Naive thymus-derived CD4-positive, alpha-beta T cell (primary cell): ENCODE measurements at regions of chr11 and their contacts with region 1.

Region 1: GRCh38 chr11:75270896-75271418 is 30.4 kb downstream of the TPBGL start:
- DNase-seq: peak in 7 of 9 donors; percentile 13 to 50 (median 44)
- ATAC-seq: no peak
- H3K4me3 ChIP-seq: no peak overlapping the region
- H3K4me3 Mint-ChIP-seq: peak overlapping the region in 3 of 10 donors; percentile 6 to 47 (median 45)
- H3K27ac ChIP-seq: no peak overlapping the region
- H3K27ac Mint-ChIP-seq: peak overlapping the region in 8 of 9 donors; percentile 82 to 99 (median 94)
- H3K4me1 ChIP-seq: peaks cover 22 to 36% of the 10 kb centered on the region in 2 donors
- H3K4me1 Mint-ChIP-seq: peaks cover 24 to 57% (median 41%) of the 10 kb centered on the region in 7 donors
- H3K27me3 ChIP-seq: no peaks in the 10 kb centered on the region
- H3K27me3 Mint-ChIP-seq: no peaks in the 10 kb centered on the region

Region 2: DNA sequence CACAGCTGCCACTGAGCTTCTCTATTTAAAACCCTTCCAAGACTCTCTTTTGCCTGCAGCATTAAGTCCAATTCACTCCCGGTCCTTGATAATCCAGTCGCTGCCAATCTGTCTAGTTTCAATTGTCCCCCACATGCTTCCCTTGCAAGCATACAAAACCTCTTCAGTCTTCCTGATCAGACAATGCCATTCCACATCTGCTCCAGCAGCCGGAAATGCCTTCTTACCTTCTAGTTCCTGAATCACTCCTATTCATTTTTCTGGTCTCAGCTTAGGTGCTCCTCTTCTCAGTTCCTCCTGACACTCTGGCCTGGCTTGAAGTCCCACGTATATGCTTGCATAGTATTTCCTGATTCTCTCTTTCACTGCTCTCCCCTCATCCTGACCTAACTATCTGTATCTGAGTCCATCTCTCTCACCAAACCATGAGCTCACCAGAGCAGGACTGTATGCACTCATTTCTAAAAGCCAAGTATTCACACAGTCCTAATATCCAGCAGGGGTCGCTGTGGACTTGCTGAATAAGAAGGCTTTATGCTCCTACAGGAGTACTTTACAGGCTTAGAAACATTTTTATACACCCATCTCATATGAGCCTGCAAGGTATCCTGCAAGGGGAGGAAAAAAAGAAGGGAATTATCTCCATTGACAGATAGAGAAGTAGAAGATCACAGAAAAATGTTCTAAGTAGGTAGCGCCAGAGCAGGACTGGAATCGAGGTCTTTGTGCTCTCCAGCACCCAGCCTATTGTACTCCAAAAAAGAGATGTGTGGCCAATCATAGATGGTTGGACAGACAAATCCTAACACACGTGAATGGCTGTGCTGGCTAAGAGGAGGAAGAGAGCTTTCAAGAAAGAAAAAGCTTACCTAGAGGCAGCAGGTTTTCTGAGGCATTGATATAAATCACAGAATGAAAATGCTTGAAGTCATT is 341.3 kb before region 1 on chr11:
- CTCF ChIA-PET with region 1: no interaction called
- POLR2A ChIA-PET with region 1: no interaction called
- intact Hi-C with region 1: loop called in 1 of 2 experiments (anchors 1 kb)
- DNase-seq: peak; percentile 9 to 74 (median 59)
- ATAC-seq: peak; percentile 92
- H3K4me3 ChIP-seq: no peak overlapping the region
- H3K4me3 Mint-ChIP-seq: no peak overlapping the region
- H3K27ac ChIP-seq: no peak overlapping the region
- H3K27ac Mint-ChIP-seq: no peak overlapping the region
- H3K4me1 ChIP-seq: no peaks in the 10 kb centered on the region
- H3K4me1 Mint-ChIP-seq: peaks cover 0 to 36% (median 0%) of the 10 kb centered on the region in 7 donors
- H3K27me3 ChIP-seq: no peaks in the 10 kb centered on the region
- H3K27me3 Mint-ChIP-seq: no peaks in the 10 kb centered on the region

Region 3: GRCh38 chr11:75204685-75205563 is 66.0 kb before region 1 on chr11:
- CTCF ChIA-PET with region 1: interaction called, 10 read pairs
- POLR2A ChIA-PET with region 1: no interaction called
- intact Hi-C with region 1: loop called in 1 of 2 experiments (anchors 1 kb)
- DNase-seq: peak; percentile 53 to 86 (median 64)
- ATAC-seq: peak; percentile 92
- H3K4me3 ChIP-seq: no peak overlapping the region
- H3K4me3 Mint-ChIP-seq: no peak overlapping the region
- H3K27ac ChIP-seq: no peak overlapping the region
- H3K27ac Mint-ChIP-seq: no peak overlapping the region
- H3K4me1 ChIP-seq: no peaks in the 10 kb centered on the region
- H3K4me1 Mint-ChIP-seq: peaks cover 0 to 2% (median 0%) of the 10 kb centered on the region in 7 donors
- H3K27me3 ChIP-seq: peaks cover 0 to 2% of the 10 kb centered on the region in 2 donors
- H3K27me3 Mint-ChIP-seq: peaks cover 0 to 9% (median 6%) of the 10 kb centered on the region in 5 donors

Region 4: DNA sequence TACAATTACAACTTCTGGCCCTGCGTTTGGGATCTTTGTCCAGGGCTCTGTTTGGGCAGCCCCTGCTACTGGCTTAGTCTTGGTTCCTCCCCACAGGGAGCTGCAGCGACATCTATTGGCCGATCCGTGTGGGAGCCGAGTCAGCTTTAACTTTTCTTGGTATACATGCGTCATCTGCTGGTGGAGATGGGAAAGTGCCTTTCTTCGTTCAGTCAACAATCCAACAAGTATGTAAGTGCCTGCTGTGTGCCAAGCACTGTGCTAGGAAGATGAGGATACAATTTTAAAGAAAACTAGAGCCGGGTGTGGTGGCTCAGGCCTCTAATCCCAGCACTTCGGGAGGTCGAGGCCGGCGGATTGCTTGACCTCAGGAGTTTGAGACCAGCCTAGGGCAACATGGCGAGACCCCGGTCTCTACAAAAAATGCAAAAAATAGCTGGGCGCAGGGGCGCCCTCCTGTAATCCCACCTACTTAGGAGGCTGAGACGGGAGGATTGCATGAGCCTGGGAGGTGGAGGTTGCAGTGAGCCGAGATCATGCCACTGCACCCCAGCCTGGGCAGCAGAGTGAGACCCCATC is 22.2 kb before region 1 on chr11:
- CTCF ChIA-PET with region 1: interaction called, 83 read pairs
- POLR2A ChIA-PET with region 1: interaction called, 5 read pairs
- intact Hi-C with region 1: loop called in 1 of 2 experiments (anchors 1 kb)
- DNase-seq: peak; percentile 70 to 87 (median 82)
- ATAC-seq: peak; percentile 99
- H3K4me3 ChIP-seq: no peak overlapping the region
- H3K4me3 Mint-ChIP-seq: no peak overlapping the region
- H3K27ac ChIP-seq: no peak overlapping the region
- H3K27ac Mint-ChIP-seq: peak overlapping the region in 2 of 9 donors; percentile 18 to 20
- H3K4me1 ChIP-seq: no peaks in the 10 kb centered on the region
- H3K4me1 Mint-ChIP-seq: peaks cover 0 to 5% (median 4%) of the 10 kb centered on the region in 7 donors
- H3K27me3 ChIP-seq: no peaks in the 10 kb centered on the region
- H3K27me3 Mint-ChIP-seq: peaks cover 0 to 37% (median 10%) of the 10 kb centered on the region in 5 donors

Region 5: DNA sequence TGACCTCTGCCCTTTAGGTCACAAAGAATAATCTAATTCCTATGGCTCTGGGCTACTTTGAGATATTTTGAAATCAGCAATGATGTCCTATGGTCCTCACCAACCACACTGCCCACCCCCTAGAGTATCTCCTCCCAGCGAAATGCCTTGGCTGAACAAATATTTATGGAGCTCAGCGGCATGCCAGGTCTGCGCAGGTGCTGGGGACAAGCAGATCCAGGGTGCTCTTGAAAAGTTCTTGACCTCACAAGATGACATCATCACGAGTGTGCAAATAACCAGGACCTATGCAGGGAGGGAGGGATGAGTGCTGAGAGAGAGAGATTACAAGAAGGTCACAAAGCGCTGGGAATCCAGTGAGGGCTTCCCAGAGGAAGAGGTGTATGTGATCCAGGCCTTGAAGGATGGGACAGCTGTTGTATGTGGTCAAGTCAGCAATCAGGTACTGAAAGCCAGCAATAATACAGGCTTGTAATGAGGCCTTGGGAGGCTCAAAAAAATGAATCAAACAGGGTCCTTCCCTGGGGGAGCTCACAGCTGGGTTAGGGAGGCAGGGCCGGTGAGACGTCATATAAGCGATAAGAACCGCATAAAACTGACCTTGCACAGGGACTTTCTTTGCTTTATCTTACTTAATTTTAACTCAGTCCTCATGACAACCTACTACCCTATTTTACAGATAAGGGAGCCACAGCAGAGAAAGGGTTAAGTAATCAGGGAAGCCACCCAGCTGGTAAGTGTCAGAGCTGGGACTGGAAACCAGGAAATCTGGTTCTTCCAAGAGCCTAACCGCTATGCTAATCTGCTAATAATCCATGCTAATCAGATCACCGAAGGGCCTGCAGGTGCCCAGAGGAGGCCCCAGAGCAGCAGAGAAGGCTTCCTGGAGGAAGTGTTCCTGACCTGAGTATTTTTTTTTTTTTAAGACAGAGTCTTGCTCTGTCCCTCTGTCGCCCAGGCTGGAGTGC is 72.2 kb after region 1 on chr11:
- CTCF ChIA-PET with region 1: interaction called, 5 read pairs
- POLR2A ChIA-PET with region 1: interaction called, 22 read pairs
- intact Hi-C with region 1: no loop called
- DNase-seq: no peak
- ATAC-seq: no peak
- H3K4me3 ChIP-seq: no peak overlapping the region
- H3K4me3 Mint-ChIP-seq: peak overlapping the region in 8 of 10 donors; percentile 6 to 84 (median 40)
- H3K27ac ChIP-seq: peak overlapping the region; percentile 31
- H3K27ac Mint-ChIP-seq: peak overlapping the region; percentile 30 to 98 (median 84)
- H3K4me1 ChIP-seq: peaks cover 35 to 93% of the 10 kb centered on the region in 2 donors
- H3K4me1 Mint-ChIP-seq: peaks cover 84 to 100% (median 98%) of the 10 kb centered on the region in 7 donors
- H3K27me3 ChIP-seq: no peaks in the 10 kb centered on the region
- H3K27me3 Mint-ChIP-seq: no peaks in the 10 kb centered on the region

Region 6: DNA sequence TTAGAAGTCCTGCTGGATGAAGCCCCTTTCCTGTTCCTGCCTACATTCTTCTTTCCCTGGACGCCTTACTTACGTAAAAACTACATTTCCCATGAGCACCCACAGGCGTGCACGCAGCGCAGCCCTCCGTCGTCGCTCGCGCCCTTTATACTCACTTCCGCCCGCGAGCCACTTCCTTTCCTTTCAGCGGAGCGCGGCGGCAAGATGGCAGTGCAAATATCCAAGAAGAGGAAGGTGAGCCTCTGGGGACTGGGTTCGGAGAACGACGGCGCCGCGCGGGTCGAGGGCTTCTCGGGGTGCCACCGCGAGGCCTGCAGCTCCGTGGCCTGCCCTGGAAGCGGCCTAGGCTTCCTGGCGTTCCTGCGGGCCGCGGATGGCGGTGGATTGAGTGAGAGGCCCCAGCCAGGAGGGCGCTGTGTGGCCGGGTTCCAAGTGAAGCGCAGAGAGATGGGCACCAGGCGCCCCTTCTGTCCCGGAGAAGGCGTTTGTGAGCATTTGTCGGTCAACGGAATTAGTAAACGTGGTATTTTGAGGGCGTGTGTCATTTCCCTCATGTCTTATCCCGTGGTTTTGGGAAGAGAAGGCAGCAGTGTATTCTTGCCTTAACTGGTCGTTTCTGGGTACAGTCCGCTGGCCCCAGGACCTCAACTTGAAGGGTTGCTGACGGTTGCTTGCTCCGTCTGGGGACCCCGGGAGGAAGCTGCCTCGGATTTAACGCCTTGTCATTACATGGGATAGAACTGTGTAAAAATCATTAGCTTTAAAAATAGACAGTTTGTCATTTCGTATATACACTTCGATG is 128.6 kb after region 1 on chr11 and contains the start of gene RPS3:
- CTCF ChIA-PET with region 1: interaction called, 416 read pairs
- POLR2A ChIA-PET with region 1: interaction called, 22 read pairs
- intact Hi-C with region 1: no loop called
- DNase-seq: peak; percentile 81 to 91 (median 88)
- ATAC-seq: peak; percentile 96
- H3K4me3 ChIP-seq: peak within 1 kb of the TSS; percentile 80
- H3K4me3 Mint-ChIP-seq: peak within 1 kb of the TSS; percentile 87 to 99 (median 94)
- H3K27ac ChIP-seq: peak within 1 kb of the TSS; percentile 86
- H3K27ac Mint-ChIP-seq: peak within 1 kb of the TSS; percentile 94 to 99 (median 96)
- H3K4me1 ChIP-seq: peaks cover 16 to 17% of the 10 kb centered on the region in 2 donors
- H3K4me1 Mint-ChIP-seq: peaks cover 20 to 54% (median 48%) of the 10 kb centered on the region in 7 donors
- H3K27me3 ChIP-seq: no peaks in the 10 kb centered on the region
- H3K27me3 Mint-ChIP-seq: peaks cover 0 to 11% (median 0%) of the 10 kb centered on the region in 5 donors
- total RNA-seq, gene RPS3: 3,135 to 5,501 (median 5,089) TPM

Region 7: GRCh38 chr11:75954039-75954438 is 683.1 kb after region 1 on chr11:
- CTCF ChIA-PET with region 1: no interaction called
- POLR2A ChIA-PET with region 1: no interaction called
- intact Hi-C with region 1: no loop called
- DNase-seq: no peak
- ATAC-seq: no peak
- H3K4me3 ChIP-seq: no peak overlapping the region
- H3K4me3 Mint-ChIP-seq: no peak overlapping the region
- H3K27ac ChIP-seq: no peak overlapping the region
- H3K27ac Mint-ChIP-seq: no peak overlapping the region
- H3K4me1 ChIP-seq: no peaks in the 10 kb centered on the region
- H3K4me1 Mint-ChIP-seq: peaks cover 0 to 19% (median 11%) of the 10 kb centered on the region in 7 donors
- H3K27me3 ChIP-seq: no peaks in the 10 kb centered on the region
- H3K27me3 Mint-ChIP-seq: no peaks in the 10 kb centered on the region